Activated CD8-positive, alpha-beta T cell treated with anti-CD3 and anti-CD28 coated beads, Interleukin-2, amount 10 ng/mL, durations not matched to agents 7 days and 5 days (primary cell): ENCODE measurements at regions of chr3 and their contacts with region 1.

Region 1: GRCh38 chr3:32374788-32375595 is 16.7 kb upstream of the CMTM7 start:
- DNase-seq: peak; percentile 86
- ATAC-seq: peak; percentile 70
- H3K4me3 Mint-ChIP-seq: no peak overlapping the region
- H3K27ac Mint-ChIP-seq: no peak overlapping the region
- H3K4me1 Mint-ChIP-seq: peaks cover 24% of the 10 kb centered on the region
- H3K27me3 Mint-ChIP-seq: peaks cover 10% of the 10 kb centered on the region

Region 2: DNA sequence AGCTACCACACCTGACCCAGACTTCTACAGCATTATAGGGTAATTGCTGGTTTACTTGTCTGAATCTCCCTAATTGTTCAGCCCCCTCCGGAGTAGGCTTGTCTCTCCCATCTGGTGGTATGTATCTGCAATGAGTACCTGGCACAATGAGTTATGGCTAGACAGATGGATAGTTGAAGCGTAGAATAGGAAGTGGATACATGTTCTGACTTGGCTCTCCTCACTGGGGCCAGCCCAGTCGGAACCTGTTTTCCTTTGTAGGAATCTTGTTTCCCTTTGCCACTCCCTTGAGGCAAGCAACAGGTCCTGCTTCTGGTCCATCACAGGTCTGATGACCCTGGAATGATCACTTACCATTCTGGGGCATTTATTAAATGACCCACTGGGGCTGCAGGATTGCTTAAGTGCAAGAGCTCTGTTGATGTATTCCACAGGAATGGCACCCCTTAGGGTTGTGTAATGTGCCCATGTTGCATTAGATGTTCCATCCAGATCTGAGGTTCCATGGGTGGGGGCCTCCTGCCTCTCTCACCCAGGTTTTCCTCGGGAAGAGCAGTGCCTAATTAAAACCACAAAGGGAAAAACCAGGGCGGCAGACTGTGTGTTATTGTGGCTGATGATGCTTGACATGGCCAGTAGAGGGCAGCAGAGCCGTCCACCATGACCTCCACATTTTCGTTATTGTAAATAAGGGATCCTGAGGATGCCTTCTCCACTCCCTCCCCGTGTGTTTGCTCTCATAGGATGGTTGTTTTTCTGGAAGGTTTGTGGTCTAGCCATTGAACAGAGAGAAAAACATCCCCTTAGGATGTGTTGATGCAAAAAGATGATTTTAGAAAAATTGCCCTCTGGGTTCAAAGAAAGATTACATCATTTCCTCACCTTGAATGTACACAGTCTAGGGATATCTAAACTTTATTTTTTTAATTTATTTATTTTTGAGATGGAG is 78.5 kb before region 1 on chr3:
- CTCF ChIA-PET with region 1: interaction called, 13 read pairs
- POLR2A ChIA-PET with region 1: no interaction called
- DNase-seq: peak; percentile 74
- ATAC-seq: peak; percentile 86
- H3K4me3 Mint-ChIP-seq: peak overlapping the region; percentile 35
- H3K27ac Mint-ChIP-seq: peak overlapping the region; percentile 74
- H3K4me1 Mint-ChIP-seq: peaks cover 19% of the 10 kb centered on the region
- H3K27me3 Mint-ChIP-seq: no peaks in the 10 kb centered on the region

Region 3: DNA sequence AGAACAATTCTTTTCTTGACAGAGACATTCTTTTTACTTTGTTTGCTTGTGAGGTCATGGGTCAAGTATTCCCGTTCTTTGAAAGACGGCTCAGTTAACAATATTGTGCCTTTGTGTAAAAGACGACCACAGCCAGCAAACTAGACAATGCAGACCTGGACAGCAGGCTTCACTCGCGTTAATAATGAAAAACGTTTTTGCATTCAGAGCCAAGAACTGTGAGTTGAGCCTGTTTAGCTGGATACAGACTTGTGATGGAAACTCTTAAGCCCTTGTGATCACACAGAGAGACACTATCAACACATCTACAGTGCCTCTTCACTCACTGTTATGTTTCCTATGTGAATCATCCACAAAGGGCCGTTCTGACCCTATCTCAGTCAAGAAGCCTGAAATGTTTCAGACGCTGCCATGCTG is 20.6 kb before region 1 on chr3:
- CTCF ChIA-PET with region 1: interaction called, 10 read pairs
- POLR2A ChIA-PET with region 1: no interaction called
- DNase-seq: no peak
- ATAC-seq: no peak
- H3K4me3 Mint-ChIP-seq: no peak overlapping the region
- H3K27ac Mint-ChIP-seq: no peak overlapping the region
- H3K4me1 Mint-ChIP-seq: no peaks in the 10 kb centered on the region
- H3K27me3 Mint-ChIP-seq: no peaks in the 10 kb centered on the region

Region 4: DNA sequence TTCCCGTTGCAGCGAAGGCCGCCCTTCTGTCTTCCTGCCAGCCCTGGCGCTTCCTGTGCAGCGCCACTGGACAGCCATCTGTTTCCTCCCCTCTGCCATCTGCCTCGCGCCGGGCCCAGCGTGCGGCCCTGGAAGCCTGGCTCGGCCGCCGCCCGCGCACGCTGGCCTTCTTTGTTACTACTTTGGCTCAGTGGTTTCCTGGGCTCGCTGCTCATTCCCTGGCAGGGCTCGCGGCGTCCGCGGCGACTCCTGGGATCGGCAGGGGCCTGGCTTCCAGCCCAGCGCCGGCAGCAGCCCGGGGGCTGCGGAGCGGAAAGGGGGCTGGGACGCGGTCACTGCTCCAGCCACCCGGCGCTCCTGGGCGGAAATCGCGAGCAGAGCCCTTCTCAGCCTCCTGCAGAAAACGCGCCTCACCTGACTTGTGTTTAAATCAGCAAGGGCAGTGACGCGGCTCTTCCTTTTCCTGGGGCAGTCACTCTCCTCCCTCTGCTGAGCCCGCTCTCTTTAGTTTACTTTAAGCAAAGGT is 26.6 kb after region 1 on chr3:
- CTCF ChIA-PET with region 1: interaction called, 86 read pairs
- POLR2A ChIA-PET with region 1: no interaction called
- DNase-seq: peak; percentile 82
- ATAC-seq: peak; percentile 83
- H3K4me3 Mint-ChIP-seq: peak overlapping the region; percentile 85
- H3K27ac Mint-ChIP-seq: peak overlapping the region; percentile 98
- H3K4me1 Mint-ChIP-seq: peaks cover 68% of the 10 kb centered on the region
- H3K27me3 Mint-ChIP-seq: no peaks in the 10 kb centered on the region

Region 5: GRCh38 chr3:32420126-32421038 is 45.4 kb after region 1 on chr3:
- CTCF ChIA-PET with region 1: interaction called, 15 read pairs
- POLR2A ChIA-PET with region 1: interaction called, 3 read pairs
- DNase-seq: no peak
- ATAC-seq: peak; percentile 47
- H3K4me3 Mint-ChIP-seq: peak overlapping the region; percentile 60
- H3K27ac Mint-ChIP-seq: peak overlapping the region; percentile 85
- H3K4me1 Mint-ChIP-seq: peaks cover 89% of the 10 kb centered on the region
- H3K27me3 Mint-ChIP-seq: no peaks in the 10 kb centered on the region

Region 6: GRCh38 chr3:32484436-32484835 is 109.4 kb after region 1 on chr3:
- CTCF ChIA-PET with region 1: interaction called, 10 read pairs
- POLR2A ChIA-PET with region 1: no interaction called
- DNase-seq: no peak
- ATAC-seq: no peak
- H3K4me3 Mint-ChIP-seq: no peak overlapping the region
- H3K27ac Mint-ChIP-seq: no peak overlapping the region
- H3K4me1 Mint-ChIP-seq: peaks cover 13% of the 10 kb centered on the region
- H3K27me3 Mint-ChIP-seq: no peaks in the 10 kb centered on the region